ENCODE measurements at regions of chr18 and their contacts with region 1.

Region 1: DNA sequence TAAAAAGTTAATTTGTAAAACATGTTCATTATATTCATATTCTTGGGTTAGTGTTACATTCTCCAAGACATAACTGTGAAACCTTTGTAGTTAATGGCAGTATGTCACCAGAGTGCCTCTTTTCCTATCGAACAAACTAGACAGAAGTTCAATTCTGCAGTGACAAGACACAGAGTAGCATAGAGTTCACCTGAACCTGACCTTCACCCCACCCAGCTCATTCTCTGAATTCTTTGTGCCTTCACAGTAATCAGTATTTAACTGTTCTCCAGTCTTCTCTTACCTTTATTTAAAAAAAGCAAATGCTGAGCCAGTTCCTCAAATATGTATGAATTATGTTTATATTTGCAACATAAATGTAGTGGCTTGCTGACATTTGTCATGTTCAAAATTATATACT is 52.9 kb upstream of the CHMP1B start:
- DNase-seq: no peak
- H3K4me3 ChIP-seq: no peak overlapping the region
- H3K27ac ChIP-seq: no peak overlapping the region
- H3K4me1 ChIP-seq: no peaks in the 10 kb centered on the region
- H3K27me3 ChIP-seq: no peaks in the 10 kb centered on the region
- CTCF ChIP-seq: no peak

Region 2: DNA sequence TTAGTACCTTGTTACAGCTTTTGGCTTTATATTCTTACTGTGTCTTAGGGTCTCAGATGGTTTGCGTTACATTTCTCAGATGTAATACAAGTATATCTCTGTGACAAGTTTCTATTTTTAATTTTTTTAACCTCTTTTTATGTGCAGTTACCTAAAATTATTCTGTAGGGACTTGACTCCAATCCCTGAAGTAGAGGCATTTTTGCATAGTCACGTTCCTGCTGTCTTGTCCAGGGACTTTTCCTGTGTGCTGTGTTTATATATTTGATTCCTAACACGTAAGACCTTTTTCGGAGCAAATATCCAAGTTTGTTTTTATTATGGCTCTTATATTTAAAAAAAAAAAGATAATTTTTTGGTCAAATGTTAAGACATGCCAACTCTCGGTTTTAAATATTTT is 18.2 kb before region 1 on chr18:
- CTCF ChIA-PET with region 1: no interaction called
- dilution Hi-C with region 1: no loop called
- in situ Hi-C with region 1: no loop called
- intact Hi-C with region 1: loop called (anchors 2 kb)
- DNase-seq: no peak
- H3K4me3 ChIP-seq: no peak overlapping the region
- H3K27ac ChIP-seq: no peak overlapping the region
- H3K4me1 ChIP-seq: no peaks in the 10 kb centered on the region
- H3K27me3 ChIP-seq: no peaks in the 10 kb centered on the region
- CTCF ChIP-seq: no peak

Measured in mammary epithelial cell (primary cell).